ENCODE measurements at regions of chr2 and their contacts with region 1.

Region 1: GRCh38 chr2:181953881-181954537 is 31.6 kb upstream of the PPP1R1C start:
- DNase-seq: peak; percentile 46
- H3K4me3 Mint-ChIP-seq: peak overlapping the region; percentile 65
- H3K27ac Mint-ChIP-seq: no peak overlapping the region
- H3K4me1 Mint-ChIP-seq: peaks cover 40% of the 10 kb centered on the region
- H3K27me3 Mint-ChIP-seq: peaks cover 8% of the 10 kb centered on the region

Region 2: GRCh38 chr2:181077128-181077709 is 876.8 kb before region 1 on chr2:
- intact Hi-C with region 1: loop called (anchors 10 kb)
- DNase-seq: peak; percentile 10
- H3K4me3 Mint-ChIP-seq: no peak overlapping the region
- H3K27ac Mint-ChIP-seq: no peak overlapping the region
- H3K4me1 Mint-ChIP-seq: peaks cover 5% of the 10 kb centered on the region
- H3K27me3 Mint-ChIP-seq: no peaks in the 10 kb centered on the region

Region 3: DNA sequence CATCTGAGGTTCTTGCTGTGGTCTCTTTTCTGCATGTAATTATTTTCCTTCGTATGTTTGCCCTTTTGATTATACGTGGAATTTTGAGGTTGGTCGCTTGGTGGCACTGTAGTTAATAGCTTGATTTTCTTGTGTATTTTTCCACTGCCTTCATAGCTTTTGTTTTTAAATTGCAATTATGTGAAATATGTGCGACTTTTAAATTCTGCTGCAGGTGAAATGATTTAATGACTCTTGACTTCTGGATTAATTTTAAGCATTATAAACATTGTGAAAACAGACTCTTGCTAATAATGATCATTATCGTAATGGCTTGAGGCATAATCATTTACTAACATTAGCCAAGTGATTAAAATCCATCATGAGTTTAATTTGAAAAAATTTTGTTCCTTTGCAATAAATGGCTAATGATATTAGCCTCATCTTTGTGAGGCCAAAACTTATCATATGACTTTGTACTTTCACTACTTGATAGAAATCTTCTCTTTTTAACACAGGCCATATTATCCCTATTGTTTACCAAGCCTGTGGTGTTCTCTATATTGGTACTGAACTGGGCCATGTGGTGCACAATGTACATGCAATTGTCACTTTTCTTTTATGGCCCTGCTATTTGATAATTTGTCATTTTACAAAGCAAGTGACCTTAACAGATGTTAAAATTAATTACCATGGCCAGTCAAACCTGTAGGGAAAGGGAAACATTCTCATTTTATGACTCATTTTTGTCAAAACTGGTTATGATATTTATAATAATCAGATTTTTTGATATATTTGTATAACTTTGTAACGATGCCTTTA is 210.9 kb before region 1 on chr2:
- intact Hi-C with region 1: loop called (anchors 1 kb)
- DNase-seq: no peak
- H3K4me3 Mint-ChIP-seq: no peak overlapping the region
- H3K27ac Mint-ChIP-seq: no peak overlapping the region
- H3K4me1 Mint-ChIP-seq: peaks cover 3% of the 10 kb centered on the region
- H3K27me3 Mint-ChIP-seq: peaks cover 24% of the 10 kb centered on the region

Region 4: DNA sequence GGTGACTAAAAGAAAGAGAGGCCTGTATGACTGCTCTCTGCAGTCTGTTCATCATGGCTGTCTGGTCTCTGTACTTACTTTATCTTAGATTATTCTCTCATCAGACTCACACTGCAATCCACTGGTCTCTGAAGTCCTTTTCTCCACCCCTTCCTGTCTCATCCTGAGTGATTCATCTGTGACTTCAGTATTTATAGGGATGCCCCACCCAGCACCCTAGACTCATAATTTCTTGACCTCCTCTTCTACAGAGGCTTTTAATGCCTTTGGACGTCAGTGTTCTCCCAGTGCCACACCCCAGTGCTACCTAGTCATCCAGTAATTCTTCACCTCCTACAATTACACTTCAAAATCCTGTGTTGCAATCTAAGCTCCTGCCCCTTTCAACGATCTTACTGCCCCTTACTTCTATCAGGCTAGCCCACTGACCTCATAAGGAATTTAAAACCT is 77.4 kb before region 1 on chr2:
- intact Hi-C with region 1: no loop called
- DNase-seq: no peak
- H3K4me3 Mint-ChIP-seq: no peak overlapping the region
- H3K27ac Mint-ChIP-seq: no peak overlapping the region
- H3K4me1 Mint-ChIP-seq: no peaks in the 10 kb centered on the region
- H3K27me3 Mint-ChIP-seq: peaks cover 16% of the 10 kb centered on the region

Region 5: DNA sequence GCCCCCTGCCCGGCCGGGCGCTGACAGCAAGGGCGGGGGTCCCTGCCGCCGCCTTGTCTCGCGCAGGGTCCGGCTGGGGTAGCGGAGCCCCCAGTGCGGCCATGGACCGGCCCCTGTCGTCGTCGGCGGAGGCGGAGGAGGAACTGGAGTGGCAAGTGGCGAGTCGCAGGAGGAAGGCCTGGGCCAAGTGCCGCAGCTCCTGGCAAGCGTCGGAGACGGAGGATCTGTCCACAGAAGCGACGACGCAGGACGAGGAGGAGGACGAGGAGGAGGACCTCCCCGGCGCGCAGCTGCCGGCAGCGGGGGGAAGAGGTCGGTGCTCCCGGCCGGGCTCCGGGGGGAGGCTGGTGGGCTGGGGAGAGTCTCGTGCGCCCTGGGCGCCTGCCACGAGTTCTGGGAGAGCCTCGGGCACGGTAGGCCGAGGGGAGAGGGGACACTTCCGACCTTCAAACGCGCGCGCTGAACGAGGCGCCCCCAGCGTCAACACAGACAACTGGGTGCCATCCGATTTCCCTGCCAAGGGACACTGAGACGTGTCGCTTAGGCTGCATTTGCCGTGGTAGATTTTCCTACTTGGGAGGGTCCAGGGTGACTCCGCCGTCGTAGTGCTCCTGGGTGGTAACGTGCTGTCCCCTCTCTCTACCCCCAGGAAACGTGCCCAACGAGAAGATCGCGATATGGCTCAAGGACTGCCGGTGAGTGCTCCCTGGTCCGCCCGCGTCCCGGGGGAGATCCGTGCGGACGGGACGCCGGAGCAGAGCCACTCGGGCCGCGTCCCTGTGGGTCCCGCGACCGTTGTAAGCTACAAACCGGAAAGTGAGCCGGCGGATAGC is 61.8 kb before region 1 on chr2:
- intact Hi-C with region 1: loop called (anchors 2 kb)
- DNase-seq: peak; percentile 61
- H3K4me3 Mint-ChIP-seq: peak overlapping the region; percentile 90
- H3K27ac Mint-ChIP-seq: peak overlapping the region; percentile 90
- H3K4me1 Mint-ChIP-seq: peaks cover 27% of the 10 kb centered on the region
- H3K27me3 Mint-ChIP-seq: peaks cover 19% of the 10 kb centered on the region

Region 6: GRCh38 chr2:181904022-181904632 is 49.9 kb before region 1 on chr2:
- intact Hi-C with region 1: loop called (anchors 5 kb)
- DNase-seq: no peak
- H3K4me3 Mint-ChIP-seq: no peak overlapping the region
- H3K27ac Mint-ChIP-seq: no peak overlapping the region
- H3K4me1 Mint-ChIP-seq: peaks cover 25% of the 10 kb centered on the region
- H3K27me3 Mint-ChIP-seq: no peaks in the 10 kb centered on the region

Region 7: DNA sequence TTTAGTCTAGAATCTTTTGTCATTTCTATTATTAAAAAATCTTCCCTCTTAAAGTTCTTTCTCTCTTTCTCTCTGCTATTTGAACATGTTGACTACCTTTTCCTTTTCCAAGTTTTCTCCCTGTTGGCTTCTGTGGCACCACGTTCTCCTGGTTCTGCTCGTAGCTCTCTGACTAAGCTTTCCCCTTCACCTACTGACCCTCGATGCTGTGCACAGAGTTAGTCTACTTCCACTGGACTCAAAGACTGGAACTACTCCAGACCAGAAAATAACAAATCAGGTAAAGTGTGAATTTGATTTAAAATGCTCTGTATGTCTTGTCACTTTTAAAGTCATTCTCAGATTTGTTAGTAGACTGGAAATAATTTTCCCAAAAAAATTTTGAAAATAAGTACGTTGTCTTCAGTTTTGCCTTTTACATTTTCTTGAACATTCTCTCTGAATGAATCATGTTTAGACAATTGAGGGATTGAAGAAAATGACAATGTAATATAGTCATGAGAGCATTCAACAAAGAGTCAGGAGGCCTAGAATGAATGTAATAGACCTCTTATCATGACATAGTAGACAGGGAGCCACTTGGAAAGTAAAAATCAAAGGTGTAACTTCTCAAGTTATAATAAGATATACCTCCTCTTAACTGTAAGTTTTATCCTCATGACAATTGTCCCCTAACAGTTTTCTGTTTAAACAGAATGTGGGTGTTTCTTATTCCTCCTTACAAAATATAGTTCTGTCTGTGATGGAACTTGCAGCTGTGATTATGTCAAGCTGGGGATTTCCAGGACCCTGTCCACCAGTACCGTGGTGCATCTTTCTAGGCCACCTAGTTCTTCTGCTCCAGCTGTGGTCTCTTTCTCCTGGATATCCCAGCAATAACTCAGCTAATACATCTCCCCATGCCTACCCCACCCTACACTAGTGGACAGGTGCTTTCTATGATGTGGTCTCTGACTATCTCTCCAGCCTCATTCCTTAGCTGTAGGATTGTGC is 37.0 kb before region 1 on chr2:
- intact Hi-C with region 1: no loop called
- DNase-seq: no peak
- H3K4me3 Mint-ChIP-seq: no peak overlapping the region
- H3K27ac Mint-ChIP-seq: no peak overlapping the region
- H3K4me1 Mint-ChIP-seq: peaks cover 2% of the 10 kb centered on the region
- H3K27me3 Mint-ChIP-seq: no peaks in the 10 kb centered on the region